ENCODE measurements at regions of chr5 and their contacts with region 1.

Region 1: DNA sequence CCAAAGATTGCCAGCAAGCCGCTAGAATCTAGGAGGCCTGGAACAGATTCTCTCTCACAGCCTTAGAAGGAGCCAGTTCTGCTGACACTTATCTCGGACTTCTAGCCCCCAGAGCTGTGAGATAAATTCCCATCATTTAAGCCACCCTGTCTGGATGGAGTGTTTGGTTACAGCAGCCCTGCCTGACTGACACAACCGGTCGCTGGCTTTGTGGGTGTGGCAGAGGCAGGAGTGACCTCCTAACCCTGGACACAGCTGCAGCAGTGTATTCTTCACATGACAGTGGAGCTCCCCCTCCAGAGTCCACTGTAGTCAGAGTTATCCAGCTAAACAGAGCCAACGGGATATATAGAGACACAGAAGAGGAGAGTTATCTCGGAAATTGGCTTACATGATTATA is 21.2 kb upstream of the IL17B start:
- DNase-seq: no peak
- ATAC-seq: no peak
- H3K4me3 ChIP-seq: no peak overlapping the region
- H3K27ac ChIP-seq: no peak overlapping the region
- H3K4me1 ChIP-seq: no peaks in the 10 kb centered on the region
- H3K27me3 ChIP-seq: no peaks in the 10 kb centered on the region
- CTCF ChIP-seq: no peak
- EP300 ChIP-seq: no peak
- POLR2A ChIP-seq: no peak
- RAD21 ChIP-seq: no peak

Region 2: GRCh38 chr5:149420545-149421371 is 20.5 kb after region 1 on chr5:
- CTCF ChIA-PET with region 1: no interaction called
- POLR2A ChIA-PET with region 1: interaction called, 11 read pairs
- RAD21 ChIA-PET with region 1: interaction called, 4 read pairs
- SMC1A ChIA-PET with region 1: interaction called, 3 read pairs
- in situ Hi-C with region 1: no loop called
- intact Hi-C with region 1: no loop called
- DNase-seq: no peak
- ATAC-seq: no peak
- H3K4me3 ChIP-seq: no peak overlapping the region
- H3K27ac ChIP-seq: no peak overlapping the region
- H3K4me1 ChIP-seq: no peaks in the 10 kb centered on the region
- H3K27me3 ChIP-seq: no peaks in the 10 kb centered on the region
- CTCF ChIP-seq: no peak
- EP300 ChIP-seq: no peak
- POLR2A ChIP-seq: no peak
- RAD21 ChIP-seq: no peak

Region 3: GRCh38 chr5:149546924-149547323 is 146.6 kb after region 1 on chr5:
- CTCF ChIA-PET with region 1: no interaction called
- POLR2A ChIA-PET with region 1: no interaction called
- RAD21 ChIA-PET with region 1: no interaction called
- SMC1A ChIA-PET with region 1: no interaction called
- in situ Hi-C with region 1: no loop called
- intact Hi-C with region 1: no loop called
- DNase-seq: no peak
- ATAC-seq: no peak
- H3K4me3 ChIP-seq: 0 out of 2 replicates have a peak overlapping the region, but pooled peaks have one; percentile 82
- H3K27ac ChIP-seq: no peak overlapping the region
- H3K4me1 ChIP-seq: no peaks in the 10 kb centered on the region; the same call in 1 of the 2 replicates
- H3K27me3 ChIP-seq: no peaks in the 10 kb centered on the region
- CTCF ChIP-seq: no peak
- EP300 ChIP-seq: no peak
- POLR2A ChIP-seq: no peak
- RAD21 ChIP-seq: no peak